Left cardiac atrium (tissue), 4 donors: ENCODE measurements at regions of chr5 and their contacts with region 1.

Region 1: DNA sequence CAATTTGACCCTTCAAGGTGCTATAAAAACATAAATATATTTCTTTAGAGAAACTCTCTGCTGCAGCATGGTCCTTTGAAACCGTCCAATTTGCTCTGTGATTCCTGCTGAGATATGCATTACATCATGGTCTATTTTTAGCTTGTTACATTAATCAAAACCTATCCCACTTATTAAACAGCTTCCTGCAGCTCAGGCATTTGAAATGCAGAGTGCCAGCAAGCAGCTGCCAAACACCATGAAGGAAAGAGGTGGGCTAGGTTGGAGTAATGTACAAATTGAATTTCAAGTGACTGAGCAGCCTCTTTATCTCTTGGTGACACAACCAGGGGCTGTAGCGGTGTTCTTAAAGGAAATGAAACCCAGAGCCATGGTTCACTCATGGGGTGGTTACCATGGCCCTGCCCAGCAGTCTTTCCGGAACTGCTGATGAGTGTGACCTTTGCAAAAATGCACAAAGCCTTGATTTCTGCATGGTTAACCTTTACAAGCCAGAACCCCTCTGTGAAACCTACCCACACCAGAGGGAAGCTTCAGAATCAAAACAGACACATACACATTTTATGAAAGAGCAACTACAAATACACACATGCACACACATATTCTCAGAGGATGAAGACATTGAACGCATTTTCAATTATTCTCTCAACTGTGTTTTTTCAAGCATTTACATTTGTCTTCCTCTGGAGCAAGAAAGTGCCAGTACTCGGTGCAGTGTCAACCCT is 155.8 kb upstream of the ZNF608 start:
- DNase-seq: no peak
- ATAC-seq: peak in 1 of 2 donors; percentile 50

Region 2: GRCh38 chr5:124617787-124618186 is 284.5 kb before region 1 on chr5:
- intact Hi-C with region 1: no loop called
- DNase-seq: no peak
- ATAC-seq: no peak

Region 3: DNA sequence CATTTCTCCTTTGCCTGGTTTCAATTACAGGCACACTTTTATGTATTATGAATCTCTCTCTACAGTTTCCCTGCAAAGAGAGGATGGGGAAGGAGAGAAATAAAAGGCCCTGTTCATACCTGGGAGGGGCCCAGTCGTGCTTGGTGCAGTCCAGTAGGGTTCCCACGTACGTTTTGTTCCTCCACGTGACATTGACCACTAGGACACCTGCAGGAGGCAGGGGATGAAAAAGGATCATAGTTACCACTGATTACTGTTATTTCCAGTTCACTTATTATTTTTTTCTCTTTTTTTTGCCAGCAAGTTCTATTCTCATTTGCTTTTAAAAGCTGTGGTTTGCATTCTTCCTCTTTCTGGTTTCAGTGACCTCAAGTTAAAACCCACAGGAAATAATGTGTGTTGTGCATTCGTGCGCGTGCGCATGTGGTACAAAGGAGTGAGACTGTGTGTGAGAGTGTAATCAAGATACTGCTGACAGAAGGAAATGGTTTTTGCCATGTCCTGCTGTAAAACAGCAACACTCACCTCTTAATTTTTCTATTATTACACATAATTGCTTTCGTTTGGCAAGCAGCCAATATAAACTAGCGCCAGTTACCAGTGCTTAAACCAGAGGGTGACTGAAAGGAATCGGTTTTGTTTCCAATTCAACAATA is 252.6 kb before region 1 on chr5:
- intact Hi-C with region 1: loop called in 1 of 2 experiments (anchors 10 kb)
- DNase-seq: peak; percentile 75
- ATAC-seq: peak; percentile 39 to 45